ENCODE measurements at regions of chr11 and their contacts with region 1.

Region 1: DNA sequence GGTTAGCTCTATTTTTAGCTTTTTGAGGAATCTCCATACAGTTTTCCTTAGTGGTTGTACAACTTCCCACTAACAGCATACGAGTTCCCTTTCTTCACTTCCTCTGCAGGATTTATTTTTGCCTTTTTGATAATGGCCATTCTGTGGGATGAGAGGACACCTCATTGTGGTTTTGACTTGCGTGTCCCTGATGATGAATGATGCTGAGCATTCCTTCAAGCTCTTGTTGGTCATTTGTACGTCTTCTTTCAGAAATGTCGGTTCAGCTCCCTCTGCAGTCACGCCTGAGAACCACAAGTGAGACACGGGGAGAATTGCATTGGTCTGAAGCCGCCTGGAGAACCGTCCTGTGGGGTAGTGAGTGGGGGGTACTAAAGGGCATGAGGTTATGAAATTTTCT is 2.0 kb upstream of the KRTAP5-10 start:
- DNase-seq: peak; percentile 88
- CTCF ChIP-seq: peak; percentile 80

Region 2: DNA sequence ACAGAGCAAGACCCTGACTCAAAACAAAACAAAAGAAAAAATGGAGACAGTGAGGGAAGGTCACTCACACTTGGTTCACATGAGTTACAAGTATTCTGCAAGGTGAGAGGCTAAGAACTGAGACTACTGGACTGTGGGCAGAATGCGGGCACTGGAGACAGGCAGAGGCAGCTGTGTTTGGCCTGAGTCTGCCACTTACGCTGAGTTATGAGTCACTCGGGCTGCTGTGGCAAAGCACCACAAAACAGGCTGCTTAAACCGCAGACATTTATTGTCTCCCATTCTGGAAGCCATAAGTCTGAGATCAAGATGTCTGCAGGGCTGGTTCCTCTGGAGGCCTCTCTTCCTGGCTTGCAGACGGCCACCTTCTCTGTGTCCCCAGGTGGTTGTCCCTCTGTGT is 433.8 kb before region 1 on chr11:
- in situ Hi-C with region 1: no loop called
- DNase-seq: no peak
- CTCF ChIP-seq: no peak

Region 3: DNA sequence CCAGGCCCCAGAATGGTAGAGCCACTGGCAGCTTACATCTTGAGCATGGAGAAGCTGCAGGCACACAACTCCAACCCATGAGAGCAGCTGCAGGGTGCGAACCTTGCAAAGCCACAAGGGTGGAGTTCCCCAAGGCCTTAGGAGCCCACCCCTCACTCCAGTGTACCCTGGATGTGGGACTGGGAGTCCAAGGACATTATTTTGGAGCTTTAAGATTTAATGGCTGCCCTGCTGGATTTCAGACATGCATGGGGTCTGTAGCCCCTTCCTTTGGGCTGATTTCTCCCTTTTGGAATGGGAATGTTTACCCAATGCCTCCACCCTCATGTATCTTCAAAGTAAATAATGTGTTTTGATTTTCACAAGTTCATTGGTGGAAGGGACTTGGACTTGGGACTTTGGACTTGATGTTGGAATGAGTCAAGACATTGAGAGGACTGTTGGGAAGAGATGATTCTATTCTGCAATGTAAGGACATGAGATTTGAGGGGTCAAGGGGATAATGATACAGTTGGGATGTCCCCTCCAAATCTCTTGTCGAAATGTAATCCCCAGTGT is 37.4 kb before region 1 on chr11:
- in situ Hi-C with region 1: loop called (anchors 5 kb)
- DNase-seq: no peak
- CTCF ChIP-seq: no peak

Region 4: DNA sequence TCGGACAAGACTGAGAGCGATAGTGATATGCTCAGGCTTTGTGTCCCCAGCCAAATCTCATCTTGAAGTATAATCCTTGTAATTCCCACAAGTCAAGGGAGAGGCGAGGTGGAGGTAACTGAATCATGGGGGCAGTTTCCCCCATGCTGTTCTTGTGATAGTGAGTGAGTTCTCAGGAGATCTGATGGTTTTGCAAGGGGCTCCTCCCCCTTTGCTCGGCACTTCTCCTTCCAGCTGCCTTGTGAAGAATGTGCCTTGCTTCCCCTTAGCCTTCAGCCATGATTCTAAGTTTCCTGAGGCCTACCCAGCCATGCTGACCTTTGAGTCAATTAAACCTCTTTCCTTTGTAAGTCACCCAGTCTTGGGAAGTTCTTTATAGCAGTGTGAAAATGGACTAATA is 645.7 kb after region 1 on chr11:
- in situ Hi-C with region 1: no loop called
- DNase-seq: no peak
- CTCF ChIP-seq: no peak

Measured in GM13977 (cell line).